PC-3 (cell line): ENCODE measurements at regions of chr6 and their contacts with region 1.

Region 1: GRCh38 chr6:7974938-7975763 is 64.6 kb upstream of the TXNDC5 start:
- DNase-seq: peak; percentile 98
- ATAC-seq: peak; percentile 82
- H3K4me3 ChIP-seq: peak overlapping the region; percentile 41
- H3K27ac ChIP-seq: peak overlapping the region; percentile 30
- H3K4me1 ChIP-seq: peaks cover 34% of the 10 kb centered on the region
- H3K27me3 ChIP-seq: no peaks in the 10 kb centered on the region
- CTCF ChIP-seq: no peak

Region 2: DNA sequence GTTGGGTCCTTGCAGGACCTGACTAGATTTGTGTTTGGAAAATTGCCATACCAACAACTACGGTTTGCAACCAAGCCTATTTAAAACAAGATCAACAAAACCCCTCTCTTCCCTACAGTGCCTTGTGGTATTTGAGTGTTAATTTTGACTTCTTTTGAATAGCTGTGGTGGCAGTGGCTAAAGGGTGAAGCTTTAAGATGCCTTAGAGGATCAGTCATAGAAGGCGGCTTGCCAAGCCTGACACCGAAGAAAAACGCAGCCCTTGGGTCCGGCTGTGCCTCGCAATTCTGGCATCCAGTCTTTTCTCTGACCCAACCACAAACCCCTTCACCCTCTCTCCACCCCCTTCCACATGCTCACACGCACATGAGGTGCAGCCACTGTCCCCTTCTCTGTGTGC is 216.7 kb before region 1 on chr6:
- CTCF ChIA-PET with region 1: no interaction called
- POLR2A ChIA-PET with region 1: interaction called, 11 read pairs
- intact Hi-C with region 1: no loop called
- DNase-seq: peak; percentile 91
- ATAC-seq: peak; percentile 73
- H3K4me3 ChIP-seq: no peak overlapping the region
- H3K27ac ChIP-seq: no peak overlapping the region
- H3K4me1 ChIP-seq: peaks cover 24% of the 10 kb centered on the region
- H3K27me3 ChIP-seq: no peaks in the 10 kb centered on the region
- CTCF ChIP-seq: no peak

Region 3: GRCh38 chr6:7910654-7911344 is 64.4 kb before region 1 on chr6 and contains the start of gene TXNDC5:
- CTCF ChIA-PET with region 1: no interaction called
- POLR2A ChIA-PET with region 1: interaction called, 7 read pairs
- intact Hi-C with region 1: loop called (anchors 1 kb)
- DNase-seq: peak; percentile 74
- ATAC-seq: peak; percentile 80
- H3K4me3 ChIP-seq: peak within 1 kb of the TSS; percentile 91
- H3K27ac ChIP-seq: peak within 1 kb of the TSS; percentile 48
- H3K4me1 ChIP-seq: peaks cover 15% of the 10 kb centered on the region
- H3K27me3 ChIP-seq: no peaks in the 10 kb centered on the region
- CTCF ChIP-seq: no peak
- total RNA-seq, gene TXNDC5: 218 and 221 TPM in 2 replicates

Region 4: DNA sequence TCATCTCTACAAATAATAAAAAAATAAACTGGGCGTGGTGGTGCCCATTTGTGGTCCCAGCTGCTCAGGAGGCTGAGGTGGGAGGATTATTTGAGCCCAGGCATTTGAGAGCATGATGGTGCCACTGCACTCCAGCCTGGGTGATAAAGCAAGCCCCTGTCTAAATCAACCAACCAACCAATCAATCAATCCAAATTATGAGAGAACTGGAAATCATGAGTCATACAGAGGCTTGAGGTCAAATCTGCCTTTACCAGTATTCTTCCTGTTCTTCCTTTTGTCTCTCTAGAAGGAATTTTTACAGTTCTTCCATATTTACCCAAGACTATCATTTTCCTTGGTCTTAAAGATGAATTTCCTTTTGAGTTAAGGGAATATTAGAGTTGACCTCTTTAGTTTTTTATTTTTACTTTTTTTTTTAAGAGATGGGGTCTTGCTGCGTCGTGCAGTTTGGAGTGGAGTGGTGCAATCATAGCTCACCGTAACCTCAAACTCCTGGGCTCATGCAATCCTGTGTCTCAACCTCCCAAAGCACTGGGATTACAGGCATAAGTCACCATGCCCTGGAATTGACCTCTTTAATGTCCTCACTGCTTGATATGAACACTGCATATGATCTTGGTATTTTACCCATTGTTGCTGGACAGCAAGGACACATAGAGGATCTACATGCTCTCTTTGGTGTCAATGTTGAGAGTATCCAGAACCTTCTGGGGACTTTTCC is 20.5 kb before region 1 on chr6:
- CTCF ChIA-PET with region 1: no interaction called
- POLR2A ChIA-PET with region 1: no interaction called
- intact Hi-C with region 1: loop called (anchors 1 kb)
- DNase-seq: peak; percentile 61
- ATAC-seq: peak; percentile 51
- H3K4me3 ChIP-seq: no peak overlapping the region
- H3K27ac ChIP-seq: peak overlapping the region; percentile 33
- H3K4me1 ChIP-seq: peaks cover 25% of the 10 kb centered on the region
- H3K27me3 ChIP-seq: no peaks in the 10 kb centered on the region
- CTCF ChIP-seq: no peak

Region 5: GRCh38 chr6:8085053-8085511 is 109.9 kb after region 1 on chr6:
- CTCF ChIA-PET with region 1: no interaction called
- POLR2A ChIA-PET with region 1: no interaction called
- intact Hi-C with region 1: loop called (anchors 1 kb)
- DNase-seq: peak; percentile 91
- ATAC-seq: peak; percentile 77
- H3K4me3 ChIP-seq: no peak overlapping the region
- H3K27ac ChIP-seq: peak overlapping the region; percentile 86
- H3K4me1 ChIP-seq: peaks cover 57% of the 10 kb centered on the region
- H3K27me3 ChIP-seq: no peaks in the 10 kb centered on the region
- CTCF ChIP-seq: no peak

Region 6: DNA sequence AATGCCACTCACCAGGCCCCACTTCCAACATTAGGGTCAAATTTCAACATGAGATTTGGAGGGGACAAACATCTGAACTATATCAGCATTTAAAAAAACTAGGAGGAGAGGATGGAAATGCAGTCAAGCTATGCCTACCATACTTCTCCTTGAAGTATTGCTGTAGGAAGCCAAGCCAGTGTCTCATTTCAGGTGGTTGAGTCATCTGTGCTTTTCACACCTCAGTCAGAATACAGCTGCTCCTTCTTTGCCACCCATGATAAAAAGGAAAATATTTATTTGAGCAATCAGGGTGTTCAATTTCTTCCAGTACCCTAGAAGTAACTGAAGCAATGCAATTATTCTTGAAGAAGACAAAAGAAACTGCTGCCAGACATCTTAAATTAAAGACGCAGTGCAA is 174.2 kb after region 1 on chr6:
- CTCF ChIA-PET with region 1: no interaction called
- POLR2A ChIA-PET with region 1: no interaction called
- intact Hi-C with region 1: no loop called
- DNase-seq: no peak
- ATAC-seq: no peak
- H3K4me3 ChIP-seq: no peak overlapping the region
- H3K27ac ChIP-seq: no peak overlapping the region
- H3K4me1 ChIP-seq: no peaks in the 10 kb centered on the region
- H3K27me3 ChIP-seq: peaks cover 74% of the 10 kb centered on the region
- CTCF ChIP-seq: no peak